Activated CD4-positive, alpha-beta T cell treated with anti-CD3 and anti-CD28 coated beads for 36 hours (primary cell): ENCODE measurements at regions of chr19 and their contacts with region 1.

Region 1: DNA sequence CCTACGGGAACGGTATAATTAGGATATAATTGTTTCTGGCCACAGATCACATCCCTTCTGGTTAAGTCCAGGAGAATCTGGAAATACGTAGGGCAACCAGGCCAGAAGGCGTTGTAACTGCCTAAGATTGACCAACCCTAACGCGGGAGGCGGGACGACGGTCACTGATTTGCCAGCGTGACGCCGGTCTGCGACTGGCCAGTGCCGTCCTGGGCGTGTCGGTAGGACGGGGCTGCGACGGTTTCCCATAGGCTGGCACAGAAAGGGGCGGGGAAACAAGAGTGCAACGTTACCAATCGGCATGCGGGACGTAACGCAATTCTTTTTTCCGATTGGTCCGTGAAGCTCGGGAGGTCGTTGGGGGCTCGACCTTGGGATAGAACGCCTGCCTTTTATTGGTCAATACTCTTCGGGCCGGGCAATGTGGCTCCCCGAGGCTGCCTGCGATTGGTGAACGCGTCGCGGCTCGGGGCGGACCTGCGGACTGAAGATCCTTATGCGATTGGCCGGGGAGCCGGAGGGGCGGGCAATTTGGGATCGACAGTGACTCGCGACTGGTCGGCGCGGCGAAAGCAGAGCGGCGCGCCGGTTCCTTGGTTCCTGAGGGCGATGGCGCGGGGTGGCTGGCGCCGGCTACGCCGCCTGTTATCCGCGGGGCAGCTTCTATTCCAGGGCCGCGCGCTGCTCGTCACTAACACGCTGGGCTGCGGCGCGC is at the start of gene MPV17L2:
- DNase-seq: peak; percentile 99
- ATAC-seq: peak; percentile 95
- H3K4me3 Mint-ChIP-seq: peak within 1 kb of the TSS; percentile 79
- H3K27ac Mint-ChIP-seq: peak within 1 kb of the TSS; percentile 91
- H3K4me1 Mint-ChIP-seq: peaks cover 22% of the 10 kb centered on the region
- H3K27me3 Mint-ChIP-seq: no peaks in the 10 kb centered on the region
- total RNA-seq, gene MPV17L2: 5.7 to 6.2 TPM

Region 2: DNA sequence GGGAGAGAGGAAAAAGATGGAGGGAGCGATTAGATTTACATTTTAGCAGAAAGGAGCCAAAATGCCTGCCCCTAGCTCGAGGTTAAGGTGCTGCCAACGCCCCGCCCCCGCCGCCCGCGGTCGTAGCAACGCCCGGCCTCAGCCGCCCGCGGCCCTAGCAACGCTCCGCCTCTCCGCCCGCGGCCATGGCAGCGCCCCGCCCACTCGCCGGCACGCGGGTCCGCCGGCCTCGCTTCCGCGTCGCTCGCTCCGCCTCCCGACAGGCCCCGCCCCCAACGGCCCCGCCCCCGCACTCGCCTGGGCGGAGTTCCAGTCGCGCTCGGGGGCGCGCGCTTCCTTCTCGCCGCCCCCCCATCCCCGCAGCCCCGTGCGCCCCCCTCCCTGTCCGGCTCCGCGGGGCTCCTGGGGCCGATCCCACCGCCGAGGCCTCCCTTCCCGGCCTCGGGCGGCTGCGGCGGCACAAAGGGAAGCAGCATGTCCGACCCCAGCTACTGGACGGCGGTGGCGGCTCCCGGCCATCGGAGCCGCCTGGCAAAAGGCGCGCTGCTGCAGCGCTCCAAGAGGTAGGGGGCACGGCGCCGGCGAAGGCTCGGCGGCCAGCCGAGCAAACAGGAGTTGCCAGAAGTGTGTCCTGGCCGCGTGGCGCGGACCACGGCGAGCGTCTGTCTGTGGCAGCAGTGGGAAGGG is 75.0 kb before region 1 on chr19:
- CTCF ChIA-PET with region 1: no interaction called
- POLR2A ChIA-PET with region 1: no interaction called
- intact Hi-C with region 1: loop called in 1 of 2 experiments (anchors 1 kb)
- DNase-seq: peak; percentile 97
- ATAC-seq: peak; percentile 79
- H3K4me3 Mint-ChIP-seq: peak overlapping the region; percentile 74
- H3K27ac Mint-ChIP-seq: peak overlapping the region; percentile 84
- H3K4me1 Mint-ChIP-seq: peaks cover 35% of the 10 kb centered on the region
- H3K27me3 Mint-ChIP-seq: no peaks in the 10 kb centered on the region

Region 3: DNA sequence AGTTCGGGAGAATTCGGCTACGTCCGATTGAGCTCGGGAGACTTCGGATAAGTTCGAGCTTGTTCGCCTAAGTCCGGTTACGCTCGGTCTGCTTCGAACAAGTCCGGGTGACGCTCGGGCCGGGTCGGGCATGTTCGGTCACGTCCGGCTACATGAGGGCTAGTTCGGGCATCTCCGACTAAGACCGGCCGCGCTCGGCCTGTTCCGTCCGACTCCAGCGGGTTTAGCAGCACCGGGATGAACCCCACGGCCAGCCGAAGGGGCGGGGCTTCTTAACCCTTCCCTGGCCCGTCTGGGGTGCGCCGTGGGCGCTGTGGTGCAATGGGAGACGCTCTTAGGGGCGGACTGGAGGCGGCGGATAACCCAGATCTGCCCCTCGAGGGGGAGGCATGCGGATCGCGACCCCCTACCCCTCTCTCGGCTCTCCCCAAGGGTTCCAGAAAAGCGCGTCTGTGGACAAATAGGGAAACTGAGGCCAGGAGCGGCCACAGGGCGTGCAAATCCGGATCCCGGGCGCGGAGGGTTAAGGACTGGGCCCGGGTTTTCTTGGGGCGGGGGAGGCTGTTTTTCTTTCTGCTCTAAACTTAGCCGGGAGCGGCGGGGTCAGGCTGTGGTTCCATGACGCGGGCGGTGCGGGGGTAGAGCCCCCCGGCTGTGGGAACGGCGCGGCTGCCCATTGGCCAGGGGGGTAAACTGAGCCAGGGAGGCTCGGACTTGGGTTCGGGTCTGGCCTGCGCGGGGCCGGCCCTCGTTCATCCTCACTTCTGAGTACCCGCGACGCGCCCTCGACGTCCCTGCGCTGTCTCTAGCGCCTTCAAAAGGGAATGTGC is 31.9 kb after region 1 on chr19:
- CTCF ChIA-PET with region 1: interaction called, 3 read pairs
- POLR2A ChIA-PET with region 1: no interaction called
- intact Hi-C with region 1: loop called in 1 of 2 experiments (anchors 1 kb)
- DNase-seq: peak; percentile 96
- ATAC-seq: peak; percentile 100
- H3K4me3 Mint-ChIP-seq: peak overlapping the region; percentile 72
- H3K27ac Mint-ChIP-seq: no peak overlapping the region
- H3K4me1 Mint-ChIP-seq: peaks cover 20% of the 10 kb centered on the region
- H3K27me3 Mint-ChIP-seq: peaks cover 51% of the 10 kb centered on the region

Region 4: DNA sequence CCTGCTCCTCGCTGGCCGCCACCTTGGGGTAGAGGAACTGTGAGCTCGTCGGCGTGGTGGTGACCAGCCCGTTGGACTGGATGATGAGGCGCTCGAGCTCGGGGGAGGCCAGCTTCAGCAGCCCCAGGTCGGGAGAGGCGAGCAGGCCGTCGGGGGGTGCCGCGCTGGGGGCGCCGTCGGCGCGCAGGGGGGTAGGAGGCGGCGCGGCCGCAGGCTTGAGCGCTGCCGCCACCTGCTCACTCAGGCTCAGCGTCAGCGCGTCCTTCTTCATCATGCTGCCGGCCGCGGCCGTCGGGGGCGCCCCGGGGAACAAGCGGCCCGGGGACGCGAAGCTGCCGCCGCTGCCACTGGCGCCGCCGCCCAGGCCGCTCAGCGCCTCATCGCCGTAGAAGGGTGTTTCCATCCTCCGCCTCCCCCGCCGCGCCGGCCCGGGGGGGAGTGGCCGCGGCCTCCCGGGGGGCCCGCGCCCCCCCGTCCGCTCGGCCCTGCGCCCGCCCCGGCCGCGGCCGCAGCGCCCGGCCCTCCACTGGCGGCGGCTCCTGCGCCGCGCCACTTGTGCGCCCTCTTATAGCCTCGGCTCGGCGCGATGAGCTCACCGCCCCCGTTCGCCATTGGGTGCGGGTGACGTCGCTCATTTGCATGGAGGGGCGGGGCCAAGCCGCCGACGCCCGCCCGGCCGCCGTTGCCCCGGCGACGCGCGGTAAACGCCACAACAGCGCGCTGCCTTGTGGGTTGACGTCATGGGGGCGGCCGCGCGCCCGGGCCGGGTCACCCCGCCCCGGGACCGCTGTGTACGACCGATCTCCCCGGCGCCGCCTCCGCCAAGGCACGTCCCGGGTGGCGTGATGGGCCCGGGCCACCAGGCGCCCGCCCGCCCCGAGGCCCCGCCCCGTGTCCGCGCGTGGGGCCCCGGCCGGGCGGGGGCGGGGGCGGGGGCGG is 88.5 kb after region 1 on chr19 and contains the start of gene JUND:
- CTCF ChIA-PET with region 1: interaction called, 3 read pairs
- POLR2A ChIA-PET with region 1: interaction called, 8 read pairs
- intact Hi-C with region 1: loop called in 1 of 2 experiments (anchors 1 kb)
- DNase-seq: peak; percentile 98
- ATAC-seq: peak; percentile 69
- H3K4me3 Mint-ChIP-seq: peak within 1 kb of the TSS; percentile 86
- H3K27ac Mint-ChIP-seq: peak within 1 kb of the TSS; percentile 98
- H3K4me1 Mint-ChIP-seq: peaks cover 54% of the 10 kb centered on the region
- H3K27me3 Mint-ChIP-seq: no peaks in the 10 kb centered on the region
- total RNA-seq, gene JUND: 254 to 311 TPM

Region 5: DNA sequence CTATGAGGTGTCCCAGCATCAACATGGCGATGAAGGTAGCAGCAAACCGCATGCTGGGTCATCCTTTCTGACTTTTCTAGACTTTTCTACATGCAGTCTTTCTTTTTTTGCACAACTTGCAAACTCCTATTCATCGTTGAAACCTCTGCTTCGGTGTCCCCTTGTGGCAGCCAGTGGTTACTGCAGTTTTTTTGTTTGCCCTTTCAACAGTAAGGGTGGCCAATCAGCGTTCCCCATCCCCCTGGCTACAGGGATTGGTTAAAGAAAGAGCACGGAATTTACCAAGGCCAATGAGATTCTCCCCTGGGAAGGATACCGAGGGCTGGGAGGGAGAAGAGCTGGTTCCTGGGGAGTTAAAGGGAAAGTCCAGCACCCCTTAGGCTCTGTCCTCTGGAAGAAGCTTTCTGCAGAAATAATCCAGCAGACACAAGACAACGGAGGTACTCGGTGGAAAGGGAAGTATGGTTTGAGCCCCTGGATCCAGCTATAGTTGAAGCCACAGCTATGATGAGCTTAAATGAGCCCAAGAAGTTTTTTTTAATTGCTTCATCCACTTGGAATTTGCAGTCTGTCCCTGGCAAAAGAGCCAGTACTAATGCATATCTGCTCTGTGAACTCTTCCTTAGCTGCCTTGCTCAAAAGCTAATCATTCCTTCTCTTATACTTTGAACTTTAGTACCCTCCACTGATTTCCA is 135.7 kb after region 1 on chr19:
- CTCF ChIA-PET with region 1: interaction called, 5 read pairs
- POLR2A ChIA-PET with region 1: interaction called, 3 read pairs
- intact Hi-C with region 1: loop called (anchors 1 kb)
- DNase-seq: peak; percentile 94
- ATAC-seq: peak; percentile 99
- H3K4me3 Mint-ChIP-seq: peak overlapping the region; percentile 65
- H3K27ac Mint-ChIP-seq: peak overlapping the region; percentile 69
- H3K4me1 Mint-ChIP-seq: peaks cover 20% of the 10 kb centered on the region
- H3K27me3 Mint-ChIP-seq: no peaks in the 10 kb centered on the region

Region 6: GRCh38 chr19:18557474-18558201 is 364.8 kb after region 1 on chr19 and contains the start of gene KXD1:
- CTCF ChIA-PET with region 1: no interaction called
- POLR2A ChIA-PET with region 1: no interaction called
- intact Hi-C with region 1: loop called in 1 of 2 experiments (anchors 2 kb)
- DNase-seq: peak; percentile 99
- ATAC-seq: peak; percentile 99
- H3K4me3 Mint-ChIP-seq: peak within 1 kb of the TSS; percentile 91
- H3K27ac Mint-ChIP-seq: peak within 1 kb of the TSS; percentile 95
- H3K4me1 Mint-ChIP-seq: peaks cover 20% of the 10 kb centered on the region
- H3K27me3 Mint-ChIP-seq: no peaks in the 10 kb centered on the region
- total RNA-seq, gene KXD1: 121 to 170 TPM